Activated naive CD4-positive, alpha-beta T cell treated with anti-CD3 and anti-CD28 coated beads for 36 hours (primary cell): ENCODE measurements at regions of chr17 and their contacts with region 1.

Region 1: GRCh38 chr17:76458580-76459490 is 5.9 kb upstream of the UBE2O start:
- DNase-seq: peak; percentile 35
- H3K4me3 Mint-ChIP-seq: no peak overlapping the region
- H3K27ac Mint-ChIP-seq: no peak overlapping the region
- H3K4me1 Mint-ChIP-seq: no peaks in the 10 kb centered on the region
- H3K27me3 Mint-ChIP-seq: no peaks in the 10 kb centered on the region

Region 2: DNA sequence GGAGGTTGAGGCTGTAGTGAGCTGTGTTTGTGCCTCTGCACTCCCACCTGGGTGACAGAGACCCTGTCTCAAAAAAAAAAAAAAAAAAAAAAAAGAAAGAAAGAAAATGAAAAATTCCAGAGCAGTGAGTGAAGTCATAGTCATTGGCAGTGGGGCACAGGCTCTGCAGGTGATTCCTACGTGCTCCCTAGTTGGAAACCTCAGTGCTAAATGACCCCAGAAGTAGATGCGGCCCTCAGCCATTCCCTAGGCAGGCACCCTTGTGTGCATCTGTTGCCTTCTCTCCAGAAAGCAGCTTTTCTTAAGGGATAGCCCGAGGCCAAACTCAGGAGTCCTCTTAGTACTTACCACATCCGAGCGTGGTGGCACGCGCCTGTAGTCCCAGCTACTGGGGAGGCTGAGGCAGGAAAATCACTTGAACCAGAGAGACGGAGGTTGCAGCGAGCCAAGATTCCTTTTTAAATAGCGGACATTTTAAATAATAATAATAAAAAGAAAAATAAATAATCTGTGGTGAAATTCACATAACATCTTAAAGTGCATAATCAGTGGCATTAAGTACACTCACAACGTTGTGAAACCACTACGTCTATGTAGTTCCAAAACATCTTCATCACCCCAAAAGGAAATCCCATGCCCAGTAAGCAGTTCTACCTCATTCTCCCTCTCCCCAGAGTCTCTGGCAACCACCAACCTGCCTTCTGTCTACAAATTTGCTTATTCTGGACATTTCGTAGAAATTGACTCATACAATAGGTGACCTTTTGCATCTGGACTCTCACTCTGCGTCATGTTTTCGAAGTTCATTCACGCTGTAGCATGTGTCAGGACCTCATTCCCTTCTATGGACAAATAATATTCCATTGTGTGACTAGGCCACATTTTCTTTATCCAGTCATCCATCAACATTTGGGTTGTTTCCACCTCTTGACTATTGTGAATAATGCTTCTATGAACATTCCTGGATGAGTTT is 86.9 kb before region 1 on chr17:
- CTCF ChIA-PET with region 1: no interaction called
- intact Hi-C with region 1: no loop called
- DNase-seq: no peak
- H3K4me3 Mint-ChIP-seq: no peak overlapping the region
- H3K27ac Mint-ChIP-seq: no peak overlapping the region
- H3K4me1 Mint-ChIP-seq: no peaks in the 10 kb centered on the region
- H3K27me3 Mint-ChIP-seq: no peaks in the 10 kb centered on the region

Region 3: DNA sequence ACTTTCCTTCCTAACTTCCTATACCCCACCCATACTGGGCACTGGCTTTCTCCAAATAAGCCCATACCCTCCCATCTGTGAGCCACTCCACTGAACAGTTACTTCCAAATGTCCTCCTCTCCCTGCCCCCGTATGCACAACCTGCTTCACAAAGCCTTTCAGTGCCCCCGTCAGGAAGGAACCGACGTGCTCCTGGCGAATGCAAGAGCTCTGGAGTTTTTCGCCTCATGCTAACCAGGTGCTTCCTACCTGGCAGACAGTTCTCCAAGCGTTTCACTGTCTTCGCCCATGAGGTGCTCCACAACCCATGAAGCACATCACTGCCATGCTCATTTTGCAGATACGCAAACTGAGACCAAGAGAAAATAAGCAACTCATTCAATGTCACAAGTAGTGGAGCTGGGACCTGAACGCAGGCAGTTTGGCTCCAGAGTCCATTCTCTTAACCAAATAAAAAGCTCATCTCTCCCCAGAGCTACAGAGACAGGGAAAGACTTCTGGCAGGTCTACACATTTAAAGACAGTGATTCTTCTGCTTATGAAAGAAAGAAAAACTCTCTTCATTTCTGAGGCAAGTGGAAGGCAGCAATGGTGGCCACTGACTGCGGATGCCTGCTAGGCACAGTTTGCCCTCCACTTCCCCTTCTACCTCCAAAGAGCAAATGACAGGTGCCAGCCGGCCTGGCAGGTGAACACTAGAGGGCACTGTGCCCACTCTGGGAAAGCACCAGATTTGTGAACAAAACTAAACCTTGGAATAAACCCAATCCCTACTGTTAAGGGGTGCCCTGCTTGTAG is 50.6 kb before region 1 on chr17:
- CTCF ChIA-PET with region 1: interaction called, 6 read pairs
- intact Hi-C with region 1: loop called (anchors 1 kb)
- DNase-seq: peak; percentile 86
- H3K4me3 Mint-ChIP-seq: no peak overlapping the region
- H3K27ac Mint-ChIP-seq: no peak overlapping the region
- H3K4me1 Mint-ChIP-seq: peaks cover 8% of the 10 kb centered on the region
- H3K27me3 Mint-ChIP-seq: no peaks in the 10 kb centered on the region